BJ (cell line): ENCODE measurements at regions of chr9 and their contacts with region 1.

Region 1: DNA sequence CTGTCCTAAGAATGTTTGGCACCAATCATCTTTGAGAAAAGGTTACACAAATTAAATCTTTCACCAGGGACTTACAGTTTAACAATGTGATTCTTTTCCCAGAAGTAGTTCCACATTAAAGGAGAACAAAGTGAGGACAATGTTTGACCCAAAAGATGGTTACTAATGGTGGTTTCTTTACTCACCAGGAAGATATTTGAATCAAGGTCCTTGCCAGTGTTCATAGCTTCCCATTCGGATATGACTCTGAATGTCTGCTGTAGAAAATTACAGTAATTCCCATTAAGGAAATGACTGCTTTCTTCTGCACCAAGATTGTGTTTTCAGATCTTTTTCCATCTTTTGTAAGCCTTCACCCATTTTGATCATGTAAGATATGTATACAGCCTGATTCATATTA is 114.6 kb upstream of the ADAMTSL1 start:
- DNase-seq: peak; percentile 51
- H3K4me3 ChIP-seq: no peak overlapping the region
- H3K27me3 ChIP-seq: no peaks in the 10 kb centered on the region
- CTCF ChIP-seq: no peak

Region 2: DNA sequence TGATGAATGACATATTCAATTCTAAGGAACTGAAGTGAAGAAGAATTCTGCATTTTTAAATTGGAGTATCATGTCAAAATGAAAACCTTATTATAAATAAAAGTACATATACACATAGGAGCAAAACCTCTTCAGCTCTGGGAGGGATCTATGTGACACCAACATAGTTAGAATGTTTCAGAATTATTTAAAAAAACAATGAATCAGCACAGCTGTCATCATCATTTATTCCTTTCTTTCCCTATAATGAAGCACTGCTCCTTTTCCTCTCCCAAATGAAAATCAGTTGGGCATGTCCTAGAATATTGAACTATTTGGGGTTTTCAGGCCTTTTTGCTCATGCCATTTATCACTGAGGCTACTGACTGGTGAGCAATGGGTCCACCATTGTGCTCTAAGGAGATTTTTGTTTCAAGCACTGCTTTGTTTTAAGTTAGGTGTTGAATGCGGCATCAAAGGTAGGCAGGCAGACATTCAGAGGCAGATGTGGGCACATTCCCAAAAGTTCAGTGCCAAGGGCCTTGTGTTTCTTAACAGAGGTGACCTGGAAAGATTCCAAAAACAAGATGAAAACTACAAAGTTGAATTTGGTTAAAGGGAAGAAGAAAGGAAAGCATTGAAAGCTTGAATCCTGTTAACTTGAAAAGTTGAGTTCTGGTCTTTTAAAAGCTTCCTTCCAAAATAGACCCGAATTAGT is 11.8 kb before region 1 on chr9:
- CTCF ChIA-PET with region 1: interaction called, 10 read pairs
- POLR2A ChIA-PET with region 1: no interaction called
- DNase-seq: no peak
- H3K4me3 ChIP-seq: no peak overlapping the region
- H3K27me3 ChIP-seq: no peaks in the 10 kb centered on the region
- CTCF ChIP-seq: no peak